ENCODE measurements at regions of chr13 and their contacts with region 1.

Region 1: GRCh38 chr13:41960639-41961465 is at the start of gene VWA8:
- DNase-seq: peak; percentile 83 to 85
- ATAC-seq: peak; percentile 94 to 98 (median 96)
- H3K4me3 ChIP-seq: peak within 1 kb of the TSS; percentile 39 to 88 (median 82)
- H3K27ac ChIP-seq: peak within 1 kb of the TSS; percentile 86 to 94 (median 90)
- H3K4me1 ChIP-seq: peaks cover 6 to 36% (median 23%) of the 10 kb centered on the region in 9 donors
- H3K27me3 ChIP-seq: no peaks in the 10 kb centered on the region
- CTCF ChIP-seq: no peak
- total RNA-seq, gene VWA8: 36.1 to 71.6 (median 60.8) TPM

Region 2: DNA sequence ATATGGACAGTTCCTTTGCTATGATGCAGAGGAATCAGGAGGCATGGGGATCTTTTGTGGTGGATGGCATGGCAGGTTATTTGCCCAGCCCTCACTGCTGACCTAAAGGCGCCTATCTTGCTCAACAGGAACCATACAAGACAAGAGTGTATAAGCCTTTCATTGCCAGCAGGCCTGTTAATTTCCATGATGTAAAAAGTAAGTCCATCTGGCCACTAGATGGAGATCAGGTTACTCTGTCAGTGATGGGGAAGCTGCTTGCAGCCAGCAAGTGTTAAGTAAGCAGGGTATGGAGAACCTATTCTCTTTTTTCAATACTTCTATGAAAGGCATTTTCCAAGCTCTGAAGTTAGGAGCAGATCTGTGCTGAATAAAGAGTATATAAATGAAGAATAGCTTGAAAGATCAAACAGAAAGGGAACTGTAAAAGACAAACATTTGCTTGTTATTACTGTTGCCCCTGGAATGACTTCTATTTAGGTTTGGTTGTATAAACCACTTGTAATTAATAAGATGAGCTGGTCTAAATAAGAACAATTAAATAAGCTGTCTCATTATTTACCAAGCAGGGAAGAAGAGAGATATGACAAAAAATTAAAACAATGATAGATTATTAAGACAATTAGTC is 292.6 kb before region 1 on chr13:
- intact Hi-C with region 1: loop called in 1 of 10 experiments (anchors 10 kb)
- DNase-seq: peak in 1 of 2 donors; percentile 74
- ATAC-seq: peak; percentile 91 to 98 (median 96)
- H3K4me3 ChIP-seq: no peak overlapping the region
- H3K27ac ChIP-seq: no peak overlapping the region
- H3K4me1 ChIP-seq: peaks cover 0 to 12% (median 4%) of the 10 kb centered on the region in 9 donors
- H3K27me3 ChIP-seq: no peaks in the 10 kb centered on the region
- CTCF ChIP-seq: peak; percentile 69 to 93 (median 83)

Region 3: DNA sequence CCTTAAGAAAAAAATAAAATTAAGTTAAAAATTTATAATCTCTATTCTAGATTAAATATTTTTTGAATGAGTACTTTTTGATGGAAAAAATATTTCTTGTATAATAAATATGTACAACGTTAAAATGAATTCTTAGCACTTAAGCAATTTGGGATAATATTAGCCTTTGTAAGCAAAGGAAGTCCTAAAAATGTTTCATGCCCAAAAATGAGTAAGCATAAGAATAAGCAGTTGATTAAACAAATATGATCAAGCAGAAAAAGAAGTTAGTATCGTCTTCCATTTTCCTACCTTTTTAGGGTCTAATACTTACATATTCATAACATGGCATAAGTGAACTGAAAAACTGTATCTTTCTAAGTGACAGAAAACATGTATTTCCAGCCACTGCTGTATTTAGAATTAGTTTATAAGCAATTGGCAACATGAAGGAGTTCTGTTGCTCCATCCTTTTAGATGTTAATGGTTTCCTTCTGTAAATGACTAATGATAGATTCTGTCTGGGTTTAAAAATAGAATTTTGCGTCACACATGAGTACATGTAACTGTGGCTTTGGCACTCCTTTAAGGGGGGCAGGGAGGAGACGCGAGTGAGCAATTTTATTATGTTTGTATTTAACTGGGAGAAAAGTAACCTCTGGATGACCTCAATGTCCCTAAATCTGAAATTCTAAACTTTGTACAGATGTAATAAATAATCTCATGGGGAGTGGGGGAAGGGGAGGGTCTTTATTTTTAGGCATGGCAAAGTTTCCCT is 266.1 kb before region 1 on chr13:
- intact Hi-C with region 1: loop called in 1 of 10 experiments (anchors 10 kb)
- DNase-seq: peak; percentile 21 to 80
- ATAC-seq: peak; percentile 88 to 97 (median 96)
- H3K4me3 ChIP-seq: peak overlapping the region in 4 of 10 donors; percentile 15 to 22 (median 16)
- H3K27ac ChIP-seq: peak overlapping the region; percentile 49 to 85 (median 74)
- H3K4me1 ChIP-seq: peaks cover 0 to 41% (median 24%) of the 10 kb centered on the region in 9 donors
- H3K27me3 ChIP-seq: no peaks in the 10 kb centered on the region
- CTCF ChIP-seq: no peak

Region 4: GRCh38 chr13:41700790-41701310 is 260.0 kb before region 1 on chr13:
- intact Hi-C with region 1: loop called in 2 of 10 experiments (anchors 10 kb)
- DNase-seq: peak in 1 of 2 donors; percentile 57
- ATAC-seq: peak in 7 of 8 donors; percentile 55 to 87 (median 82)
- H3K4me3 ChIP-seq: no peak overlapping the region
- H3K27ac ChIP-seq: peak overlapping the region in 6 of 10 donors; percentile 11 to 60 (median 37)
- H3K4me1 ChIP-seq: peaks cover 5 to 46% (median 28%) of the 10 kb centered on the region in 9 donors
- H3K27me3 ChIP-seq: no peaks in the 10 kb centered on the region
- CTCF ChIP-seq: no peak

Region 5: GRCh38 chr13:41827507-41828213 is 133.2 kb before region 1 on chr13:
- intact Hi-C with region 1: no loop called
- DNase-seq: no peak
- ATAC-seq: peak in 3 of 8 donors; percentile 20 to 82 (median 49)
- H3K4me3 ChIP-seq: no peak overlapping the region
- H3K27ac ChIP-seq: peak overlapping the region in 6 of 10 donors; percentile 3 to 69 (median 28)
- H3K4me1 ChIP-seq: peaks cover 0 to 35% (median 14%) of the 10 kb centered on the region in 9 donors
- H3K27me3 ChIP-seq: no peaks in the 10 kb centered on the region
- CTCF ChIP-seq: no peak

Region 6: DNA sequence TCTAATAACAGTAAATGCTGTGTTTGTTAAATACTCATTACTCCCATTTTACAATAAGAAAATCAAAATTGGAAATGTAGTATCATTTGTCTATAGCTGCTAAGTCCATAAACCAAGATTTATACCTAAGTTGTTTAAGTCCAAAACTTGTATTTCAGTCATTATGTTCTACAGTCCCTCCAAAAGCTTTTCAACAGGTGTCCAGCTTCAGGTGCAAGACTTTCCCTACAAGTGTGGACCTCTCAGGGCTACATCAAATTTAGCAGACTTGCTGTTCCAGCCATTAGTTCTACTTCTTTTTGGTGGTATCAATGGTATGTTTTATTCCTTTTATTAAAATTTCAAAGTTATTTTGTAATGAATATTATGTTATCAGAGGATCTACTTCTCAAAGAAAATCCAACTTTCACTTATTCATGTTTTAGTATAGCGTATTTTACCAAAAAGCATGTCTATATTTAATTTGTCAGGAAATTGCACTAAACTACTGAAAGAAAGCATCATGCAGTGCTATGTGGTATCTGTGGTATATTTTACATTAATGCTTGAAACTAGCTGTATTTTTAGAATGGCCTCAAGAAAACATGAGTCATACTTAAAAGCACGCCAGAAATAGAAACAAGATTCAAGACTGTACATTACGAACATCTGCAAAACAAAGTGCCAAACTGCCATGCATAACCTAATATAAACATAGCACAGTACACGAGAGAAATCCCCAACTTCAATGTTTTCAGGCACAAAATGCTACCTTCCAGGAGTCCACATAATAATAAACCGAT is 44.5 kb before region 1 on chr13:
- intact Hi-C with region 1: loop called in 1 of 10 experiments (anchors 2 kb)
- DNase-seq: no peak
- ATAC-seq: peak in 6 of 8 donors; percentile 18 to 63 (median 54)
- H3K4me3 ChIP-seq: peak overlapping the region in 1 of 10 donors; percentile 2
- H3K27ac ChIP-seq: peak overlapping the region in 8 of 10 donors; percentile 7 to 70 (median 52)
- H3K4me1 ChIP-seq: peaks cover 5 to 68% (median 47%) of the 10 kb centered on the region in 9 donors
- H3K27me3 ChIP-seq: no peaks in the 10 kb centered on the region
- CTCF ChIP-seq: no peak

Region 7: DNA sequence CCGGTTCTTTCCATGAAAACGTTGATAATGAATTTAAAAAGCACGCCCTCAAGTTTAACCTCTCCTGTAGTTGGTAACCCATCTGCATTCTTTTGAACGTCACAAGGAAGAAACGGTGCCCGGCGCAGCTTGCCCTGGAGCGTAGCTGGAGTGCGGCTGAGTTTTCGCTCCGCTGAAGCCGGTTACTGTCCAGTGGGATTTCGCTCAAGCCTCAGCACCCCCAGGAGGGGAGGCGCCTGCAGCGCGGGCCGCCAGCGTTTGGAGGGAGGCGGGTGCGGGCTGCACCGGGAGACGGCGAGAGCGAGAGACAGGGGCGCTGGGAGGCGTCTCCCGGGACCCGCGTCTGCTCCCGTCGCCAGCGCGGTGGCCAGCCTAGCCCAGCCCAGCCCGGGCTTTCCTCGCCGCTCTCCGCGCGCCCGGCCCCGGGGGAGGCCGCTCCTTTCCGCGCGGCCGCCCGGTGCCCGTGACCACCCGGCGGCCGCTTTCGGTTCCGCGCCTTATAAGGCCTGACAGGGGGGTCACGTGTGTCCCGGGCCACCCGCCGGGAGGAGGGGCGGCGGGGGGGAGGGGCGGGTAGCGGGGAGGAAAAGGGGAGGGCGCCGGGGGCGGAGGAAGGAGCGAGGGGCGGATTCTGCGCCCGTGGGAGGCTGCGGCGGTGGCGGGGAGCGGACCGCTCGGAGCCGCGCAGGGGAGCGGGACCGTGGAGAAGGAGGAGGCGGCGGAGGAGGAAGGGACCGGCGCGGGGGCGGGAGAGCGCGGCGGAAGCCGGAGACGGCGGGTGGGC is 79.3 kb after region 1 on chr13:
- intact Hi-C with region 1: loop called in 5 of 10 experiments (anchors 5 to 10 kb)
- DNase-seq: peak; percentile 94 to 95
- ATAC-seq: peak; percentile 90 to 96 (median 94)
- H3K4me3 ChIP-seq: peak overlapping the region; percentile 28 to 96 (median 90)
- H3K27ac ChIP-seq: peak overlapping the region; percentile 94 to 99 (median 97)
- H3K4me1 ChIP-seq: peaks cover 0 to 27% (median 17%) of the 10 kb centered on the region in 9 donors
- H3K27me3 ChIP-seq: no peaks in the 10 kb centered on the region
- CTCF ChIP-seq: peak in 4 of 9 donors; percentile 6 to 24 (median 16)

Region 8: GRCh38 chr13:42110410-42111155 is 149.7 kb after region 1 on chr13:
- intact Hi-C with region 1: loop called in 1 of 10 experiments (anchors 5 kb)
- DNase-seq: peak in 1 of 2 donors; percentile 34
- ATAC-seq: peak in 6 of 8 donors; percentile 28 to 66 (median 44)
- H3K4me3 ChIP-seq: no peak overlapping the region
- H3K27ac ChIP-seq: no peak overlapping the region
- H3K4me1 ChIP-seq: peaks cover 0 to 41% (median 21%) of the 10 kb centered on the region in 9 donors
- H3K27me3 ChIP-seq: no peaks in the 10 kb centered on the region
- CTCF ChIP-seq: peak; percentile 78 to 88 (median 83)